CD4-positive, alpha-beta T cell (primary cell): ENCODE measurements at regions of chr11 and their contacts with region 1.

Region 1: GRCh38 chr11:64152841-64153691 is 12.8 kb downstream of the MACROD1 start:
- DNase-seq: peak; percentile 40 to 83 (median 63)
- ATAC-seq: peak; percentile 96
- H3K4me3 ChIP-seq: no peak overlapping the region
- H3K4me3 Mint-ChIP-seq: no peak overlapping the region
- H3K27ac ChIP-seq: no peak overlapping the region
- H3K27ac Mint-ChIP-seq: no peak overlapping the region
- H3K4me1 ChIP-seq: peaks cover 12% of the 10 kb centered on the region
- H3K4me1 Mint-ChIP-seq: no peaks in the 10 kb centered on the region
- H3K27me3 ChIP-seq: no peaks in the 10 kb centered on the region
- H3K27me3 Mint-ChIP-seq: no peaks in the 10 kb centered on the region
- CTCF ChIP-seq: peak; percentile 99

Region 2: DNA sequence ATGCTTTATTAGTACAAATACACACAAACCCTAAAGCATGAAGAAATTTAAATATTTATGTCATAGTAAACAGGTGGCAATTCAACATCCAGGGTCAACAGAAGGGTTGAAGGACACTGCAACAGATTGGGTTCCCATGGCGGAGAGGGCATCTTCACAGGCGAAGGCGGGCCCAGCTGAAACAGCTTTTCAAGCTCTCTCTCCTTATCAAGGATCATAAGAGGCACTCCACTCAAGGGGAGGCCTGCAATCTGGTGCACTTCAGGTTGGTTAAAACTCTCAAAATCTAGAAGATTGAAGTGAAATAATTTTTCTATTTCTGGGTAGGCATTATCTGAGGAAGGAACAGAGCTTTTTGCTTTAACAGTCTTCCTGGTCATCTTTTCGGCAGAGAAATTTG is 1120.6 kb before region 1 on chr11:
- CTCF ChIA-PET with region 1: no interaction called
- POLR2A ChIA-PET with region 1: no interaction called
- intact Hi-C with region 1: loop called in 1 of 2 experiments (anchors 10 kb)
- DNase-seq: no peak
- ATAC-seq: no peak
- H3K4me3 ChIP-seq: no peak overlapping the region
- H3K4me3 Mint-ChIP-seq: no peak overlapping the region
- H3K27ac ChIP-seq: no peak overlapping the region
- H3K27ac Mint-ChIP-seq: no peak overlapping the region
- H3K4me1 ChIP-seq: peaks cover 2% of the 10 kb centered on the region
- H3K4me1 Mint-ChIP-seq: no peaks in the 10 kb centered on the region
- H3K27me3 ChIP-seq: peaks cover 0 to 5% of the 10 kb centered on the region in 2 experiments
- H3K27me3 Mint-ChIP-seq: peaks cover 48% of the 10 kb centered on the region
- CTCF ChIP-seq: no peak

Region 3: GRCh38 chr11:63768237-63769043 is 384.6 kb before region 1 on chr11 and contains the start of gene ZFTA:
- CTCF ChIA-PET with region 1: interaction called, 4 read pairs
- POLR2A ChIA-PET with region 1: no interaction called
- intact Hi-C with region 1: loop called in 1 of 2 experiments (anchors 2 kb)
- DNase-seq: peak; percentile 21 to 81 (median 52)
- ATAC-seq: peak; percentile 68
- H3K4me3 ChIP-seq: peak within 1 kb of the TSS; percentile 82
- H3K4me3 Mint-ChIP-seq: peak within 1 kb of the TSS; percentile 97
- H3K27ac ChIP-seq: no peak within 1 kb of the TSS
- H3K27ac Mint-ChIP-seq: peak within 1 kb of the TSS; percentile 16
- H3K4me1 ChIP-seq: peaks cover 20% of the 10 kb centered on the region
- H3K4me1 Mint-ChIP-seq: peaks cover 13% of the 10 kb centered on the region
- H3K27me3 ChIP-seq: peaks cover 10 to 19% of the 10 kb centered on the region in 2 experiments
- H3K27me3 Mint-ChIP-seq: peaks cover 11% of the 10 kb centered on the region
- CTCF ChIP-seq: no peak
- total RNA-seq, gene ZFTA: 0.95 to 1.0 TPM

Region 4: DNA sequence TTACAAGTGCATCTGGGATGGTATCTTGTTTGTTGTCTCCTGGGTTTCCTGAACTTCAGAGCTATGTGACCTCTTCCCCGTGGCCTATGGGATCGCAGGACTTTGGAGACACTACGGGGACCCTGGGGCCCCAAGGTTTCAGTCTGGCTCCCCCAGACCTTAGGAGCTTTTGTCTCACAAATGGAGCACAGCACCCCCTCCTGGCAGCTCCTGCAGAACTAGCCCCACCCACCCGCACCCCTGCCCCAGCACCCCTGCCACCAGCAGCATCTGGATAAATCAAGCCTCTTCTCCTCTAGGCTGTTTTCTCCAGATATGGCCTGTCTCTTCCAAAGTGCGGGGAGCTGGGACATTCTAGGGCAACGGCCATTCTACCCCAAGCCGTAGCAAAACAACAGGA is 246.5 kb before region 1 on chr11:
- CTCF ChIA-PET with region 1: no interaction called
- POLR2A ChIA-PET with region 1: no interaction called
- intact Hi-C with region 1: loop called in 1 of 2 experiments (anchors 5 kb)
- DNase-seq: peak; percentile 47 to 79 (median 60)
- ATAC-seq: peak; percentile 82
- H3K4me3 ChIP-seq: no peak overlapping the region
- H3K4me3 Mint-ChIP-seq: no peak overlapping the region
- H3K27ac ChIP-seq: no peak overlapping the region
- H3K27ac Mint-ChIP-seq: peak overlapping the region; percentile 36
- H3K4me1 ChIP-seq: no peaks in the 10 kb centered on the region
- H3K4me1 Mint-ChIP-seq: no peaks in the 10 kb centered on the region
- H3K27me3 ChIP-seq: no peaks in the 10 kb centered on the region
- H3K27me3 Mint-ChIP-seq: no peaks in the 10 kb centered on the region
- CTCF ChIP-seq: peak; percentile 59

Region 5: GRCh38 chr11:64000026-64000739 is 152.9 kb before region 1 on chr11:
- CTCF ChIA-PET with region 1: interaction called, 15 read pairs
- POLR2A ChIA-PET with region 1: no interaction called
- intact Hi-C with region 1: loop called (anchors 1 kb)
- DNase-seq: peak; percentile 53 to 91 (median 70)
- ATAC-seq: peak; percentile 76
- H3K4me3 ChIP-seq: peak overlapping the region; percentile 41
- H3K4me3 Mint-ChIP-seq: peak overlapping the region; percentile 11
- H3K27ac ChIP-seq: no peak overlapping the region
- H3K27ac Mint-ChIP-seq: no peak overlapping the region
- H3K4me1 ChIP-seq: peaks cover 28% of the 10 kb centered on the region
- H3K4me1 Mint-ChIP-seq: peaks cover 9% of the 10 kb centered on the region
- H3K27me3 ChIP-seq: peaks cover 0 to 3% of the 10 kb centered on the region in 2 experiments
- H3K27me3 Mint-ChIP-seq: no peaks in the 10 kb centered on the region
- CTCF ChIP-seq: peak; percentile 75

Region 6: DNA sequence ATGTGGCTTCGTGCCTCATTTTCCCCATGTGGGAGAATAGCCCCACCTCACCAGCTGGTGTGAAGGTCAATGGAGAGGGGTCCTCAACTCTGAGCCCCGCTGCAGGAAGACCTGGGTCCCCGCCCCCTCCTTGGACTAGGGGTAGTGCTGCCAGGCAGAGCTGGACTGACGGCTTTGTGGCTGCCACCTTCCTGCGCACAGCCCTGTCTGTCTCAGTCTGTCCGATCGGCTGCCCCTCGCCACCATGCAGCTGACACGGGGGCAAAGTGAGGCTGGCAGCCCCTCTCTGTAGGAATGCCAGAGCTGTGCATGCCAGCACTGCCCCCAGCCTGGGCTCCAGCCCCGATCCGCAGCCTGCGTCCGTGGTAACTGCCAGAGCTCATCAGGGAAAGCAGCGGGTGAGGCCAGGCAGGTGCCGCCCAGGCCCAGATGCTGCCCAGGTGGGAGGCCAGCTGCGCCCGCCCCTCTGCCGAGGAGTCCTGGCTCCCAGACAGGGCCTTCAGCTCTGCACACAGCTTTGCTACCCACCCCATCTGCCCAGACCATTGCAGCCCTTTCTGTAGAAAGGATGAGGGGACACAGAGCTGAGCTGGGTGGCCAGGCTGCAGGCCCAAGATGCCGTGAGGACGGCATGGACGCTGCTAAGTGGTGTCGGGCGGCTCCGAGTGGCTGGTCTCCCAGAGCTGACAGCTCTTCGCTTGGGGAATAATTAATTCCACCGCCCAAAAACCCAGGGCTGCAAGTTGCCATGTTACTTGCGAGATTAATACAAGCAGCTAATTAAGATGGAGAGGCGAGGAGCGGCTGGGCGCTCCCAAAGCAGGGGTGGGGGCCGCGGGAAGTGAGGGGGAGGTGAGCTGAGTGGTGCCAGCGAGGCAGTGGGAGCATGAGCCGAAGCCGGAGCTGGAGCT is 136.9 kb before region 1 on chr11:
- CTCF ChIA-PET with region 1: no interaction called
- POLR2A ChIA-PET with region 1: no interaction called
- intact Hi-C with region 1: no loop called
- DNase-seq: no peak
- ATAC-seq: no peak
- H3K4me3 ChIP-seq: no peak overlapping the region
- H3K4me3 Mint-ChIP-seq: no peak overlapping the region
- H3K27ac ChIP-seq: no peak overlapping the region
- H3K27ac Mint-ChIP-seq: no peak overlapping the region
- H3K4me1 ChIP-seq: no peaks in the 10 kb centered on the region
- H3K4me1 Mint-ChIP-seq: no peaks in the 10 kb centered on the region
- H3K27me3 ChIP-seq: no peaks in the 10 kb centered on the region
- H3K27me3 Mint-ChIP-seq: peaks cover 2% of the 10 kb centered on the region
- CTCF ChIP-seq: no peak